ENCODE measurements at regions of chr15 and their contacts with region 1.

Region 1: GRCh38 chr15:89177633-89178306 is 43.6 kb downstream of the RLBP1 start:
- DNase-seq: peak in 1 of 2 donors; percentile 79
- ATAC-seq: peak; percentile 73
- H3K4me3 ChIP-seq: no peak overlapping the region
- H3K27ac ChIP-seq: no peak overlapping the region
- H3K4me1 ChIP-seq: peaks cover 0 to 7% of the 10 kb centered on the region in 2 donors
- H3K27me3 ChIP-seq: no peaks in the 10 kb centered on the region

Region 2: DNA sequence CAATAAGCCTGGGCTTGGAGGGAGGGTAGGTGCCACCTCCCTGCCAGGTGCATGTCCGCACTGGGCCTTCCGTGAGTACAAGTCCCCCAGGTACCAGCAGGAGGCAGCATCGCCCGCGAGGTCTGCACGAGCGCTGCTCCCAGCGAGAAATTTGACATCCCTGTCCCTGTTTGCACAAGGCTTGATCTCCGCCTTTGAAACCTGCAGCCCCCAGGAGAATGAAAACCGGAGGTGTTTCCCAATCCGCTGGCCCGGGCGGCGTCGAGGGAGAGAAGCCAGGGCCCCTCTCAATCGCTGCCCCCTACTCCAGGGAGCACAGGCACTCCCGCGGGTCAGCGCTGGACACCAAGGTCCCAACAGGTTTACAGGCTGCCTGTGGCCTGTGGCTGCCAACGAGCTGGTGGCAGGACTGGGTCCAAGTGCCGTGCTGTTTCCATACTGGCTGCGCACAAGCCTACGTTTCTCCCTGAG is 283.4 kb before region 1 on chr15:
- intact Hi-C with region 1: loop called in 1 of 2 experiments (anchors 2 kb)
- DNase-seq: peak; percentile 77 to 94
- ATAC-seq: peak; percentile 49
- H3K4me3 ChIP-seq: peak overlapping the region; percentile 67 to 90
- H3K27ac ChIP-seq: no peak overlapping the region
- H3K4me1 ChIP-seq: peaks cover 0 to 2% of the 10 kb centered on the region in 2 donors
- H3K27me3 ChIP-seq: no peaks in the 10 kb centered on the region

Region 3: GRCh38 chr15:88904624-88905327 is 273.0 kb before region 1 on chr15:
- intact Hi-C with region 1: loop called in 1 of 2 experiments (anchors 5 kb)
- DNase-seq: peak; percentile 86 to 95
- ATAC-seq: peak; percentile 87
- H3K4me3 ChIP-seq: no peak overlapping the region
- H3K27ac ChIP-seq: peak overlapping the region in 1 of 2 donors; percentile 74
- H3K4me1 ChIP-seq: peaks cover 0 to 2% of the 10 kb centered on the region in 2 donors
- H3K27me3 ChIP-seq: no peaks in the 10 kb centered on the region

Region 4: DNA sequence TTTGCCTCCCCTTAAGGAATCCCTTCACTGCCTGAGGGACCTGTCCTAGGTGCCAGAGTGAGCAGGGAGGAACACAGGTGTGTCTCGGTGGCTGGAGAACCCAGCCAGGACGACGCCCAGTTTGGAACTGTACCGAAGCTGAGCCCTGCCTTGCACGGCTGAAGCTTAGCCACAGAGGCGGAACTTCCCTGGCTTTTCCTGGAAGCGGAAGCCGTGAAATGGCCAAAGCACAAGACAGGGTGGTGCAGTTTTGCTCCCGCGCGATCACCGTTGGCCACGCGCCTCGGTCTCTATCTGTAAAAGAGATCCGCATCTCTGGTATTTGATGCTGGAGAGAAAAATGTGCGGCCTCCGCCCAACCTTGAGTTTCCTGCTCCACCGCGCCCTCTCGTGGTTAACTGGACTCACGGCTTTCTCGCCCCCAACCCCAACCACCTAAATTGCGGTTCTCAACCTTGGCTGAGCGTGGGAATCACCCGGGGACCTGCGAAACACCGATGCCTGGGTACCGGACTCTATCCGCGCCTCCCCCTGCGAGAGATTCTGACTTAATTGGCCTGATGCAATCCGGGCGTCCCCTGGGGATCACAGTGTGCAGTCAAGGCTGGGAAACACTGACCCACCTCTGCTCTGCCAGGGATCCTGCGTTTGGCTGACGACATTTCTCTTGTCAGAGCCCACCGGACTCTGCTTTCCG is 160.3 kb before region 1 on chr15:
- intact Hi-C with region 1: no loop called
- DNase-seq: peak; percentile 90 to 93
- ATAC-seq: peak; percentile 82
- H3K4me3 ChIP-seq: no peak overlapping the region
- H3K27ac ChIP-seq: peak overlapping the region; percentile 80 to 95
- H3K4me1 ChIP-seq: peaks cover 4% of the 10 kb centered on the region in 2 donors
- H3K27me3 ChIP-seq: no peaks in the 10 kb centered on the region

Region 5: DNA sequence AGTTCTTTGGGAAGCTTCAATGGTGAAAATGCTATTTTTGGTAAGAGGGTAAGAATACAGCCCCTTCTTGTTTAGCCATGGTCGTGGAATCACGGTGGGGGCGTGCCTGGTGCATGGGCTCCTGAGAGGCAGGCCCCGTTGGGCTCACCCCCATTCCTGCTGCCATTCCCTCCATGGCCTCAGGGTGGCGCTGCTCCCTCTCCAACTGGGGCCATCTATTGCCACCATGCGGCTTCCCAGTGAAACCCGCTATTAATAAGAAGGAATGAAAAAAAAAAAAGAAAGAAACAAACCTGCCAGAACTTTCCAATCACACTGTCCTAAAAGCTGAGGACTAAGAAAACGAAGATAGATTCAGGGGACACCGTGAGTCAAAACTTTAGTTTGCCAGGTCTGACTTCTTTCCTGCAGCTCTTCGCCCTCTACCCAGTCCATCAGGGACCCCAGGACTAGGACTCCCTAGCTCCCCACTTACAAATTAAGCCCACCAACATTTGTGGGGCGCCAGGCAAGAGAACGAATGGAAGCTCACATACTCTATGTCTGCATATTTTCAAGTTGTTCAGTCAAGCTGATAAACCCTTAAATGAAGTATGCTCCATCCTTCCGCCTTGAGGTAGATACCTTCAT is 120.2 kb before region 1 on chr15:
- intact Hi-C with region 1: loop called (anchors 1 to 5 kb)
- DNase-seq: peak; percentile 85 to 95
- ATAC-seq: peak; percentile 95
- H3K4me3 ChIP-seq: no peak overlapping the region
- H3K27ac ChIP-seq: no peak overlapping the region
- H3K4me1 ChIP-seq: peaks cover 0 to 6% of the 10 kb centered on the region in 2 donors
- H3K27me3 ChIP-seq: no peaks in the 10 kb centered on the region

Region 6: DNA sequence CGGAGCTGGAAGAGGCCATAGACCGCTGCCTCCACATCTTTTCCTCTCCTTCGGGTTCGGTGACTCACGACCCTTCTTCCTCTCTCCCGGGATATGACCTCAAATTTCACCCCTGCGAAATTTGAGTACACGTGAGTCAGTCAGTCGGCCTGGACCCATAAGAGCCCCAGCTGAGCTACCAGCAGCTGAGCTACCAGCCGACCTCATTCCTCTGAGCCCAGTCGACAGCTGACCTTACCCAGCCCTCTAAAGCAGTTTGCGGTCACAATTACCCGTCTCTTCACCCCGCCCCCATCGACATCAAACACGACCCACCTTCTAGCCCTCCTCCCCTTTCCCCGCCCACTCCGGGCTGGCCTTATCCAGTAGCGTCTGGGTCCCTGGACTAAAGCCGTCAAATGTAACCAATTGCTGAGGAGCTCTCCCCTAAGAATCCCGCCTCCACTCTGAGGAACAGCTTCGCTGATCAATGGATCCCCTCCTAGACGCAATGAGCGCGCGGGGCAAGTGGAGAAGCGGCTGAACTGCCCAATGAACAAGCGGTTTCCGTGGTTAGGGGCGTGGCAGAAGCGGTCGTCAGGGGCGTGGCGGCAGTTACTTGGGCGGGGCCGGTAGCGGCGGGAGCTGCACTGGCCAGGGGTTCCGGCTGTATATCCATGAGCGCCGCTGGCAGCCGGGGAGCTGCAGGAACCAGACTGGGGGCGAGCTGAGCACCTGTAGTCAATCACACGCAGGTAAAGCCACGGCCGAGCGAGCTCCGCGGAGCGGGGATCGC is 89.8 kb before region 1 on chr15 and contains the start of gene ABHD2:
- intact Hi-C with region 1: loop called (anchors 10 kb)
- DNase-seq: peak; percentile 99 to 100
- ATAC-seq: peak; percentile 97
- H3K4me3 ChIP-seq: peak within 1 kb of the TSS; percentile 74 to 93
- H3K27ac ChIP-seq: peak within 1 kb of the TSS; percentile 88 to 97
- H3K4me1 ChIP-seq: peaks cover 0 to 3% of the 10 kb centered on the region in 2 donors
- H3K27me3 ChIP-seq: no peaks in the 10 kb centered on the region
- total RNA-seq, gene ABHD2: 135 to 221 TPM